ENCODE measurements at regions of chr21 and their contacts with region 1.

Region 1: GRCh38 chr21:29465546-29465945 is 166.8 kb downstream of the BACH1 start:
- H3K4me3 ChIP-seq: no peak overlapping the region
- H3K27ac ChIP-seq: no peak overlapping the region
- H3K4me1 ChIP-seq: no peaks in the 10 kb centered on the region
- CTCF ChIP-seq: no peak

Region 2: DNA sequence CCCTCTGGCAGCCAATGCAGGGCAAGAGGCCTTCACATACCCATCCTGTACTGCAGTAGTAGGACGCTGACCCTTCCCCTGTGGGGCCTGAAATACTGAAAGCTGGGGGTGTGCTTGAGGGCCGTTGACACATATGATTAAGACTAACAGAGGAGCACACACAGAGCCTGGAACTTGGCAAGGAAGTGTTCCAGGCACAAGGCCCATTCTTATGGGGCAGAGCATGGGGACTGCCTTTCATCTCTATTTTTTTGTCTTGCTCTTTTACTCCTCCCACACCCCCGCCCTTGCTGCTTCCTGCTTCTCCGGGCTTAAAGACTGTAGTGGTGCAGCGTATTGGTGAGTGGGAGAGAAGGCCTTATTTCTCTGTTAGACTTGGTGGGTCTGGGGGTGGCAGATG is 29.4 kb before region 1 on chr21:
- CTCF ChIA-PET with region 1: no interaction called
- POLR2A ChIA-PET with region 1: no interaction called
- H3K4me3 ChIP-seq: no peak overlapping the region
- H3K27ac ChIP-seq: no peak overlapping the region
- H3K4me1 ChIP-seq: 0 out of 2 replicates have a peak, but pooled peaks cover 2% of the 10 kb centered on the region
- CTCF ChIP-seq: no peak

Region 3: DNA sequence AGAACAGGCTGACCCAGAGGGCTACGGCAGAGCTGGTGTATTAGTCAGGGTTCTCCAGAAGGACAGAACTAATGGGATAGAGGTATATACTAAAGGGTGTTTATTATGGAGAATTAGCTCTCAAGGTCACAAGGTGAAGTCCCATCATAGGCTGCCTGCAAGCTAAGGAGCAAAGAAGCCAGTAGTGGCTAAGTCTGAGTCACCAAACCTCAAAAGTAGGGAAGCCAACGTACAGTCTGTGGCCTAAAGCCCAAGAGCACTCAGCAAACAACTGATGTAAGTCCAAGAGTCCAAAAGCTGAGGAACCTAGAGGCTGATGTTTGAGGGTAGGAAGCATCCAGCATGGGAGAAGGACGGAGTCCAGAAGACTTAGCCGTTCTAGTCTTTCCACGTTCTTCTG is 12.4 kb after region 1 on chr21:
- CTCF ChIA-PET with region 1: interaction called, 17 read pairs
- POLR2A ChIA-PET with region 1: no interaction called
- H3K4me3 ChIP-seq: no peak overlapping the region
- H3K27ac ChIP-seq: no peak overlapping the region
- H3K4me1 ChIP-seq: no peaks in the 10 kb centered on the region
- CTCF ChIP-seq: no peak

Measured in HEK293 (cell line).